WTC11 (cell line): ENCODE measurements at regions of chrX and their contacts with region 1.

Region 1: GRCh38 chrX:69222103-69223090 is 57.1 kb upstream of the PJA1 start:
- DNase-seq: peak; percentile 87
- ATAC-seq: peak; percentile 72
- H3K4me3 Mint-ChIP-seq: peak overlapping the region; percentile 43
- H3K27ac Mint-ChIP-seq: no peak overlapping the region
- H3K4me1 Mint-ChIP-seq: peaks cover 11% of the 10 kb centered on the region
- H3K27me3 Mint-ChIP-seq: peaks cover 51% of the 10 kb centered on the region
- CTCF ChIP-seq: peak; percentile 79

Region 2: DNA sequence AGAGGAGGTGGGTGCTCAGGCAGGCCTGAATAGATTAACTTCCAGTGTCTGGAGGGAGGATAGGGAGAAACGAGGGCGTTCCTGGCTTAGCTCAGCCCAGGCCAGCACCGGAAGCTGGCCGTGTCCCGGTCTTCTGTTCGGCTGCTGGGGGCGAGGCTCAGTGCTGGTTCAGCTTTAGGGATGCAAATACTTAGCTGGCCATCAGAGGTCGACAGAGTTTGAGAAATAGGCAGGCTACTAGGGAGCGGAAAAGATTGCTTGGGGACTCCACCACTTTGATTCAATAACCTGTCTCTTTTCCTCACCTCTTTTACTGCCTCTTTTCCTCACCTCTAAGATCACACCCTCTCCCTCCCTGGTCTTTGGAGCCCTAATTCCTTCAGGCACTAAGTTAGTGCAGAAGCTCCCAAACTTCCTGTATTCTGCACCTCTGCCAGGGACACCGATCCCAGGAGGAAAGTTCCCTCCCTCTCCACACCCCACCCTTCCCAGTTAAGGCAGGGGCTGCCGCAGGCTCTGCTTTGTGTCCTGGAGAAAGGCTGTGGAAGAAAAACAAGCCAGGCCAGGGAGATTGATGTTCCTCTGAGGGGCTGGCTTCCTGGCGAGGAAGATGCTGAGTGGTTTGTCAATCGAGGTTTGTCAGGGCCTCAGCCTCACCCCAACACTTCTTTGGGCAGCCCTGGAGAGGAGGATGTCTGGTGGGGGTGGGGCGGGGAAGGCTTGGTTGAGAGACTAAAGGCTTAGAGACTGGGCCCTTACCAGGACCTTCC is 399.6 kb before region 1 on chrX:
- CTCF ChIA-PET with region 1: interaction called, 107 read pairs
- POLR2A ChIA-PET with region 1: interaction called, 10 read pairs
- DNase-seq: no peak
- ATAC-seq: peak; percentile 96
- H3K4me3 Mint-ChIP-seq: no peak overlapping the region
- H3K27ac Mint-ChIP-seq: no peak overlapping the region
- H3K4me1 Mint-ChIP-seq: 0 out of 2 replicates have a peak, but pooled peaks cover 2% of the 10 kb centered on the region
- H3K27me3 Mint-ChIP-seq: peaks cover 56% of the 10 kb centered on the region
- CTCF ChIP-seq: no peak

Region 3: GRCh38 chrX:69109683-69110082 is 112.7 kb before region 1 on chrX:
- CTCF ChIA-PET with region 1: interaction called, 15 read pairs
- POLR2A ChIA-PET with region 1: no interaction called
- DNase-seq: no peak
- ATAC-seq: no peak
- H3K4me3 Mint-ChIP-seq: no peak overlapping the region
- H3K27ac Mint-ChIP-seq: no peak overlapping the region
- H3K4me1 Mint-ChIP-seq: peaks cover 25% of the 10 kb centered on the region
- H3K27me3 Mint-ChIP-seq: no peaks in the 10 kb centered on the region
- CTCF ChIP-seq: no peak

Region 4: DNA sequence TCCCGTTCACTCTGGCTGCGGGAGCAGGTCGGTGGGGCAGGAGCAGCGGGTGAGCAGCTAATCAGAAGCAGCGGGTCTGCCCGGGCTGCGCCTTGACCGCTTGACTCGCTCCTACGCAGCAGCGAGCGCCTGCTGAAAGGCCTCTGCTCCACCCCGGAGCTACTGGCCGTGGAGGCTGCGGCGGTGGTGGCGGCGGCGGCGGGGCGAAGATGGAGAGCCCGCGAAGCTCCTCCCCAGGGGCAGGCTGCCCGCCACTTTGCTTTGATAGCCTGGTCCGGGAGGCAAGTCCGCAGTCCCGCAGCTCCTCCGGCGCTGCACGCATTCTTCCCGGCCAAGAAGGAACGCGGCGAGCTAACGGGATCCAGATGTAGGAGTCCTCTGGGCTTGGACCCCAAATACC is 93.8 kb before region 1 on chrX:
- CTCF ChIA-PET with region 1: interaction called, 27 read pairs
- POLR2A ChIA-PET with region 1: no interaction called
- DNase-seq: peak; percentile 51
- ATAC-seq: peak; percentile 80
- H3K4me3 Mint-ChIP-seq: peak overlapping the region; percentile 45; the same call in 1 of the 2 replicates
- H3K27ac Mint-ChIP-seq: no peak overlapping the region
- H3K4me1 Mint-ChIP-seq: peaks cover 30% of the 10 kb centered on the region
- H3K27me3 Mint-ChIP-seq: peaks cover 42% of the 10 kb centered on the region
- CTCF ChIP-seq: no peak

Region 5: DNA sequence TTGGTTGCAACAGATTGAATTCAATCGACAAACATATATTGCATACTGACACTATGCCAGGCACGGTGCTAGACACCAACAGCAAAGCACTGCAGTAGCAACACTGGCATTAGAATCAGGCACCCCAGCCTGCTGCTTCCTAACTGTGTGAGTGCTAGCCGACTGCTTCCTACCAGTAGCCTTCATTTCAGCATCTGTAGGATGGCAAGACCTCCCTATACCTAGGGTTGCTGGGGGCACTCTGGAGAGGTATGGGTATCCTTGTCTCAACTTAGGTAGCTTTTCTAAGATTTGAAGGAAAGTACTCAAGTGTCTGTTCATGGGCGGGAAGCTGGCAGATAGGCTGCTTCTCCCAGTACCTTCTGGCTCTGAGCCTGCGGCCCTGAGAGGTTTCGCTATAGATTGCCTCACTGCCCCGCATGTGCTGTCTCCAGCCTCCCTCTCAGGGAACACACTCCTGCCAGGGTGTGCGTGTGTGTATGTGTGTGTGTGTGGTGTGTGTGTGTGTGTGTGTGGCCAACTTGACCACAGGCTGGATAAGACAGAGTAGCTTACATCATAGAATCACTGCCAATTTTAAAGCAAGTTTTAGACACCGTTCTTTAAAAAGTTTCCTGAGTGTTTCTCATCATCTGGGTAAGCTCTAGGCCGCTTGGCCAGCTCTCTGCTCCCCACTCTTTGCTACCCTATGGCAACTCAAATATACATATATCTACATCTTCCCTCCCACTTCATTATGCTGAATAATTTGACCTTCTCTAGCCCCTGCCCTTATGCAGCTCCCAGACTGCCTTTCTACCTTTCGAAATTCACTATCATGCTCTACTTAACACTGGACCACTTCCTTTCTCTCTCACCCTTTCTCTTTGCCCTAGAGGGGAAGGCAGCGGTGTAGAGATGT is 39.9 kb after region 1 on chrX:
- CTCF ChIA-PET with region 1: interaction called, 22 read pairs
- POLR2A ChIA-PET with region 1: no interaction called
- DNase-seq: no peak
- ATAC-seq: no peak
- H3K4me3 Mint-ChIP-seq: no peak overlapping the region
- H3K27ac Mint-ChIP-seq: no peak overlapping the region
- H3K4me1 Mint-ChIP-seq: peaks cover 17% of the 10 kb centered on the region
- H3K27me3 Mint-ChIP-seq: peaks cover 98% of the 10 kb centered on the region
- CTCF ChIP-seq: no peak

Region 6: DNA sequence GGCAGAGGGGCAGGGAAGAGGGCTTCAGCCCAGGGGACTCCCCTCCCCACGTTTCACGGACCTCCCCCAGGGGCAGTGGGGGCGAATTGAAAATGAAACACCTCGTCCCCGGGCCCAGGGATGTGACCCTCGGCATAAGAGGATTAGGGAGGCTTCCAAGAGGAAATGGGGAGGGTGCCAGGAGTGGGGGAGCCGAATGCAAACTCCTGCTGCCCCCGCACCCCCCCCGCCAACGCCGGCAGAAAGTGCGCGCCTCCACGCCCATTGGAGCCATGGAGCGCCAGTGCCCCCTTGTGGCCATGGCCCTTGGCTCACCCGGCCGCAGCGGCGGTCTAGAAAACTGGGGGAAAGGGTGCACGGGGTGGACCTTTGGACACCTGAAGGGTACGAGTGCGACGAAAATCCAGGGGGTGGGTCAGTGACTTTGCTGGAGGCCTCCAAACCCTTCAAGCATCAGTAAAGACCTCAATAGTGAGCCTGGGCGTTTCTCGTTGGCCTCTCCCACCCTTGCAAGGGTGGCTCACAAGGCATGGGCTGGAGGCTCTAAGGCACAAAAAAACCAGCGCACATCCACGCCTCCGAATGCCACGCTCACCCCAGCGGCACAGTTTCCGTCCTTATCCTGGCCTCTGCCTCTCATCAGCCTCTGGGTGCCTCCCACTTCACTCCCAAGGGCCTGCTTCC is 63.6 kb after region 1 on chrX:
- CTCF ChIA-PET with region 1: interaction called, 85 read pairs
- POLR2A ChIA-PET with region 1: no interaction called
- DNase-seq: peak; percentile 66
- ATAC-seq: peak; percentile 58
- H3K4me3 Mint-ChIP-seq: peak overlapping the region; percentile 61
- H3K27ac Mint-ChIP-seq: no peak overlapping the region
- H3K4me1 Mint-ChIP-seq: peaks cover 19% of the 10 kb centered on the region
- H3K27me3 Mint-ChIP-seq: peaks cover 65% of the 10 kb centered on the region
- CTCF ChIP-seq: peak; percentile 61

Region 7: DNA sequence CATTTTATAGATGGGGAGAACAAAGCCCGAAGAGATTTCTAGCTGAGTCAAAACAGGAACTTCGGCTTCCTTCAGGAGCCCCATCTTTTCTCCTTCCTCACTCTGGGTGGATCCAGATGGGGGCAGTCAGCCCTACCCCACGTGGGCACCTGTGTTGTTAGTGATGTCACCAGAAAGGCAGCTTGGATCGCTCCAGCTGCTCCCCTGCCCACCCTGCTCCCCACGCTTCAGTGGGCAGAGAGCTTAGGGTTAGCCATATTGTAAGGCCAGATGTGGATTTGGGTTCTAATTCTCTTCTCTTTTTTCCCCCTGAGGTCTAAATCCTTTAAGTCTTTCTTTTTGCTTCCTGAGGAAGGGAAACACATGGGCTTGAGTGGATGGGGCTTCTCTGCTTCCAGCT is 75.1 kb after region 1 on chrX:
- CTCF ChIA-PET with region 1: no interaction called
- POLR2A ChIA-PET with region 1: no interaction called
- DNase-seq: no peak
- ATAC-seq: no peak
- H3K4me3 Mint-ChIP-seq: no peak overlapping the region
- H3K27ac Mint-ChIP-seq: no peak overlapping the region
- H3K4me1 Mint-ChIP-seq: no peaks in the 10 kb centered on the region
- H3K27me3 Mint-ChIP-seq: peaks cover 5% of the 10 kb centered on the region; the same call in 1 of the 2 replicates
- CTCF ChIP-seq: no peak